Activated CD8-positive, alpha-beta T cell treated with anti-CD3 and anti-CD28 coated beads for 36 hours (primary cell): ENCODE measurements at regions of chr10 and their contacts with region 1.

Region 1: DNA sequence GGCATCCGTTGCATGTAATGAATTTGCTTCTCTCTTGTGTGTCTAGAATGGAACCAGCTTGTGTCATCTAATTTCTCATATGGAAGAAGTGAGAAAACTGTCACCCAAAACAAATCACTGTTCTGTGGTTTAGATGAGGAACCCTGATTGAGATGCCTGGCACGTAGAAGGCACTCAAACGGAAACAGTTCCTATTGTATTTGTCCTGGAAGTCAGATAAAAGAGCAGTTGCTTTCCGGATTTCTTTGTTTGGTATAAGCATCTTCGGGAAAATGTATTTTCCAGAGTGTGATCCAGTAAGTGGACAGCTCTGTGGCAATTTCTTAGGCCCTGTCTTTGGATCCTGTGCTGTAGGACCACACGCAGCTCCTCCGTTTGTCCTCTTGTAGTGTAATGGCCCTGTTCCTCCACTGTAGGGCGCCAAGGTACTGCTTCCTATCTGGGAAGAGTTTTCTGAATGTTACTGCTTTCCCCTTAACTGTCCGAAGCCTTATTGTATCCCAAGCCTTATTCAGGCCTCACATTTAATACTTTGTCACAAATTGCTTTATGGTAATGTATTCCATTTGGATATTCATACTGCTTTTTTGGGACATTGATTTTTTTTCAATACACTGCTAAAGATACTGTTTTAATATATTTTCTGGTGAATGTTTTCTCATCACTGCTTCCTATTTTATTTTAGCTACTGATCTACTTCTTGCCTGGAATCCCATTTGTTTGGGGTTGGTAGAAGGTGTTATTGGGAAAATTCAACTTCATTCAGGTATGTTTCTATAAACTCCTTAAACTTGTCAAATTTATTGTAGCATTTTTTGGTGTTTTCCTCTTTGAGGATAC is 24.8 kb downstream of the INPP5F start:
- DNase-seq: peak; percentile 77
- ATAC-seq: peak; percentile 99
- H3K4me3 Mint-ChIP-seq: no peak overlapping the region
- H3K27ac Mint-ChIP-seq: no peak overlapping the region
- H3K4me1 Mint-ChIP-seq: peaks cover 7% of the 10 kb centered on the region
- H3K27me3 Mint-ChIP-seq: no peaks in the 10 kb centered on the region
- CTCF ChIP-seq: peak; percentile 94

Region 2: DNA sequence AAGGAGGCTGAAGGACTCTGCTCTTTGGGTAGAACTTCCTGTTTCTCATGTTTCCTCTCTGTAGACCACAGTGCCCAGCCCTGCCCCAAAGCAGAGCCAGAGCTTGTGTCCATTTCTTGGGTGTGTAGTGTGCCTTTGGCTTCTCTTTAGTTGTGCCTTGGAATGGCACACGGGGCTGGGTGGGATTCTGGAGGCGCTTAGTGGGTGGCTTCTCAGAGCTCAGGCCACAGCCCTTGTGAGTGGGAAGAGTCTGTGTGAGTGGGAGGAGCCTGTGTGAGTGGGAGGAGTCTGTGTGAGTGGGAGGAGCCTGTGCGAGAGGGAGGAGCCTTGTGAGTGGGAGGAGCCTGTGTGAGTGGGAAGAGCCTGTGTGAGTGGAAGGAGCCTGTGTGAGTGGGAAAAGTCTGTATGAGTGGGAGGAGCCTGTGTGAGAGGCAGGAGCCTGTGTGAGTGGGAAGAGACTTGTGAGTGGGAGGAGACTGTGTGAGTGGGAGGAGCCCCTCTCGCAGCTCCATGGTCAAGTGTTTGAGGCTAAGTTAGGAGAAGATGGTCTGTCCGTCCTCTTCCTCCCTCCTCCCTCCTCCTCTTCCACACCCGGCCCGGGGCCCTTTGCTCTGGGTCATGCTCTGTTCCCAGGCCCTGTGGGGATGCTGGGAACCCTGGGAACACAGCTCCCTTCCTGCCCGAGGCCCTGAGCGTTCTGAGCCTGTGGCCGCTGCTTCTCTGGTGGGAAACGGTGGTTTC is 390.3 kb before region 1 on chr10:
- CTCF ChIA-PET with region 1: no interaction called
- POLR2A ChIA-PET with region 1: no interaction called
- intact Hi-C with region 1: no loop called
- DNase-seq: peak; percentile 20
- ATAC-seq: peak; percentile 78
- H3K4me3 Mint-ChIP-seq: no peak overlapping the region
- H3K27ac Mint-ChIP-seq: peak overlapping the region; percentile 56
- H3K4me1 Mint-ChIP-seq: peaks cover 5% of the 10 kb centered on the region
- H3K27me3 Mint-ChIP-seq: no peaks in the 10 kb centered on the region
- CTCF ChIP-seq: no peak

Region 3: DNA sequence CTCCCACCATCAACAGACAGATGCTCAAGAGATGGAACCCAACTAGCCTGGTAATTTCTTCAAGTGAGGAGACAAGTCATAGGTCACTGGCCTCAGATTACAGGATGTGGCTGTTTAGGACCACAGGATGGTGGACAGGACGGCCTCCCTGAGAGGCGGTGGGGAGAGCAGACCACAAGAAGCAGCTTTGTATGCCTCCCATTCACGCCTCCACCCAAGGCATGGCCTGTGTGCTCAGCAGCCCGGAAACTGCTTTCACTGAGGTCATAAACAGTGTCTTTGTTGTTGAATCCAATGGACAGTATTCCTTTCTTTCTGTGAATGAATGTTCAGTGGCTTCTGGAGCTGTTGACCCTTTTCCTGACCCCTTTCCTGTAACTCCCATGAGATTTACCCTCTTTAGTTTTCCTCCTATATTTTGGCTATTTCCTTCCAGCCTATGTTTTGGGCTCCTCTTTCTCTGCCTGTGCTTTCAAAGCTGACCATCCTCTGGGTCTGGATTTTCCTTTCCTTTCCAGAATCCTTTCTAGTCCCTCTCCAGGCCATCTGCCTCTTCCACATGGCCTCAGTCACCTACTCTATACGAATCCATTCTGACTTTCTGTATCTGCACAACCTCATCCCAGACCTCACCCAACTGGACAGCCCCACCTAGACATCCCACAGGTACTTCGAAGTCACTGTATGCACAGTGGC is 57.2 kb before region 1 on chr10:
- CTCF ChIA-PET with region 1: interaction called, 46 read pairs
- POLR2A ChIA-PET with region 1: no interaction called
- intact Hi-C with region 1: no loop called
- DNase-seq: peak; percentile 36
- ATAC-seq: peak; percentile 78
- H3K4me3 Mint-ChIP-seq: no peak overlapping the region
- H3K27ac Mint-ChIP-seq: no peak overlapping the region
- H3K4me1 Mint-ChIP-seq: peaks cover 7% of the 10 kb centered on the region
- H3K27me3 Mint-ChIP-seq: peaks cover 4% of the 10 kb centered on the region
- CTCF ChIP-seq: no peak

Region 4: DNA sequence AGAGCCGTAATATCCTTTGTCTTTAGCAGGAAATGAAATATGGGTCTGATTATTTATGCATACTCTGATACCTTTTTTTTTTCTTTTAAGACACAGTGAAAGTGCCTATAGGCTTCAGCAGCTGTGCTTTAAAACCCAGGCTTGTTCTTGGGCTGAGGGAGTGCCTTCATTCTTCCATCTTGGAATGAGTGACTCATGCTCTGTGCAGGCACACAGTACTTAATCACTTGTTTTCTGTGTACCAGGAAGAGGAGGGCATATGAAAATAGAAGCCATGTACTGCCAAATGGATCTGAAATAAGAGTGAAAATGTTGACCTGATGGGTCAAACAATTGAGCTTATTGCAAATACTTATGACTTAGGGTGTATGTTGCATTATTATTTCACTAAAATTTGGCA is 12.8 kb before region 1 on chr10:
- CTCF ChIA-PET with region 1: interaction called, 24 read pairs
- POLR2A ChIA-PET with region 1: no interaction called
- intact Hi-C with region 1: no loop called
- DNase-seq: peak; percentile 14
- ATAC-seq: peak; percentile 81
- H3K4me3 Mint-ChIP-seq: no peak overlapping the region
- H3K27ac Mint-ChIP-seq: no peak overlapping the region
- H3K4me1 Mint-ChIP-seq: peaks cover 35% of the 10 kb centered on the region
- H3K27me3 Mint-ChIP-seq: no peaks in the 10 kb centered on the region
- CTCF ChIP-seq: no peak

Region 5: GRCh38 chr10:119769886-119770285 is 19.3 kb after region 1 on chr10:
- CTCF ChIA-PET with region 1: interaction called, 24 read pairs
- POLR2A ChIA-PET with region 1: interaction called, 3 read pairs
- intact Hi-C with region 1: no loop called
- DNase-seq: no peak
- ATAC-seq: no peak
- H3K4me3 Mint-ChIP-seq: no peak overlapping the region
- H3K27ac Mint-ChIP-seq: no peak overlapping the region
- H3K4me1 Mint-ChIP-seq: peaks cover 9% of the 10 kb centered on the region
- H3K27me3 Mint-ChIP-seq: no peaks in the 10 kb centered on the region
- CTCF ChIP-seq: no peak

Region 6: DNA sequence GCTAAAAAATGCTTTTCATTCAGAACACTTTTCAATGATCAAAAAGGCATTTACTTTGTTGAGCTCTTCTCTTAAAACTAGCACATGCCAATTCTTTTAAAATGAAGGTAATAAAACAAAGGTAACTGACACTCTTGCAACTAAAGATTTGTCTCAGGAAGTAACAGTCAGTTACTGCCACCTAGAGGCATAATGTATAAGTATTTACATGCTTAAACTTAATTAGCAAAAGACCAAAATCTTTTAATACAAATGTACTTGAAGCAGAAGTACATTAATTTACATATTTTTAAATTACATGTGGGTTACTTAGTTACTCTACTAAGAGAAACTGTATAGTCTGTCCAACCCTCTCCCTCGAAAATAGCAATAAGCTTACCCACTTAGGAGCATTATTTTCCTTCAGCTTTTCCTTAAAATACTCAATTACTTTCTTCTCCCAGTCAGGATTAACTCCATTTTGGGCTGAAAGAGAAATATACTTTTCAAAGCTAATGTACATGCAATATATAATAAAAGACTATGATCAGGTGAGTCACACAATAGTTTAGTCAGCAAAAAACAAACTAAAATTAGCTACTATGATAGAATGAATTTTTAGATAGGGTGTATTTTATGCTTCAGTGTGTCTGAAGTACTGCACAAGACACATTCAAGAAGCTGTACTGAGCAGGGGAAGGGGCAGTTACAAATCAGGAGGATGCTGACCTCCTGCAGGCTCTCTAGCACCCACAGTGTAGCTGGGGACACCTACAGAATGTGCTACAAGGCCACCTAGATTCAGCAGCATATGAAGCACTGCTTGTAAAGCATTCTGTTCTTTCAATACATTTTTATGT is 109.0 kb after region 1 on chr10:
- CTCF ChIA-PET with region 1: interaction called, 34 read pairs
- POLR2A ChIA-PET with region 1: no interaction called
- intact Hi-C with region 1: loop called (anchors 5 kb)
- DNase-seq: no peak
- ATAC-seq: peak; percentile 55
- H3K4me3 Mint-ChIP-seq: no peak overlapping the region
- H3K27ac Mint-ChIP-seq: peak overlapping the region; percentile 10
- H3K4me1 Mint-ChIP-seq: peaks cover 40% of the 10 kb centered on the region
- H3K27me3 Mint-ChIP-seq: no peaks in the 10 kb centered on the region
- CTCF ChIP-seq: peak; percentile 83